Heart right ventricle (tissue), 16 donors: ENCODE measurements at regions of chr1 and their contacts with region 1.

Region 1: GRCh38 chr1:222654849-222655248 is 37.0 kb downstream of the MIA3 start:
- DNase-seq: peak in 1 of 2 donors; percentile 42
- ATAC-seq: peak in 7 of 8 donors; percentile 63 to 90 (median 72)
- H3K4me3 ChIP-seq: peak overlapping the region in 1 of 10 donors; percentile 18
- H3K27ac ChIP-seq: peak overlapping the region in 6 of 10 donors; percentile 4 to 79 (median 56)
- H3K4me1 ChIP-seq: peaks cover 0 to 18% (median 0%) of the 10 kb centered on the region in 9 donors
- H3K27me3 ChIP-seq: no peaks in the 10 kb centered on the region
- CTCF ChIP-seq: peak in 2 of 9 donors; percentile 13 to 34

Region 2: DNA sequence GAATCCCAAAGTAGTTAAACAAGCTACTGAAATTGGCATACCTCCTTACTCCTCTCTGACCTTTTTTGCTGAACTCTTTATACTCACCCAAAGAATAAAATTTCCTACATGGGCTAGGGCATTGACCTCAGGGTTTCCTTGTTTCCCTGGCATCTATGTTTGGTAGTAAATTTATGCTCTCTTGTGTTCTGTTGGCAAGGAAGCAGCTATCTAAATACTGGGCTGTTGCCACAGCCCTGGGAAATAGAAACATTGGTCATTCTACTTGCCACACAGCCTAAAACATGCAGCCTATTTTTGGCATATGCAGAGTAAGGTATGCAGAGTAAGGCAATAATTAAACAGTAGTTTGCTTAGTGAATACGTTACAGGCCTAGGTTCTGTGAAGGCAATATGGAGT is 1424.2 kb before region 1 on chr1:
- intact Hi-C with region 1: no loop called
- DNase-seq: peak in 1 of 2 donors; percentile 49
- ATAC-seq: peak; percentile 61 to 97 (median 90)
- H3K4me3 ChIP-seq: no peak overlapping the region
- H3K27ac ChIP-seq: peak overlapping the region in 8 of 10 donors; percentile 17 to 56 (median 40)
- H3K4me1 ChIP-seq: peaks cover 0 to 48% (median 25%) of the 10 kb centered on the region in 9 donors
- H3K27me3 ChIP-seq: no peaks in the 10 kb centered on the region
- CTCF ChIP-seq: no peak

Region 3: GRCh38 chr1:222600281-222600680 is 54.6 kb before region 1 on chr1:
- intact Hi-C with region 1: no loop called
- DNase-seq: no peak
- ATAC-seq: no peak
- H3K4me3 ChIP-seq: no peak overlapping the region
- H3K27ac ChIP-seq: no peak overlapping the region
- H3K4me1 ChIP-seq: no peaks in the 10 kb centered on the region
- H3K27me3 ChIP-seq: no peaks in the 10 kb centered on the region
- CTCF ChIP-seq: no peak

Region 4: GRCh38 chr1:222680080-222680479 is 25.2 kb after region 1 on chr1:
- intact Hi-C with region 1: no loop called
- DNase-seq: no peak
- ATAC-seq: no peak
- H3K4me3 ChIP-seq: no peak overlapping the region
- H3K27ac ChIP-seq: no peak overlapping the region
- H3K4me1 ChIP-seq: no peaks in the 10 kb centered on the region
- H3K27me3 ChIP-seq: no peaks in the 10 kb centered on the region
- CTCF ChIP-seq: no peak

Region 5: GRCh38 chr1:222691016-222691415 is 36.2 kb after region 1 on chr1:
- intact Hi-C with region 1: no loop called
- DNase-seq: no peak
- ATAC-seq: no peak
- H3K4me3 ChIP-seq: no peak overlapping the region
- H3K27ac ChIP-seq: no peak overlapping the region
- H3K4me1 ChIP-seq: no peaks in the 10 kb centered on the region
- H3K27me3 ChIP-seq: no peaks in the 10 kb centered on the region
- CTCF ChIP-seq: no peak

Region 6: GRCh38 chr1:222706815-222707214 is 52.0 kb after region 1 on chr1:
- intact Hi-C with region 1: loop called in 1 of 10 experiments (anchors 10 kb)
- DNase-seq: no peak
- ATAC-seq: no peak
- H3K4me3 ChIP-seq: no peak overlapping the region
- H3K27ac ChIP-seq: no peak overlapping the region
- H3K4me1 ChIP-seq: peaks cover 0 to 25% (median 19%) of the 10 kb centered on the region in 9 donors
- H3K27me3 ChIP-seq: no peaks in the 10 kb centered on the region
- CTCF ChIP-seq: peak in 1 of 9 donors; percentile 5